Adrenal gland (tissue), 19 donors: ENCODE measurements at regions of chr5 and their contacts with region 1.

Region 1: GRCh38 chr5:96934708-96935558 is 947 bp upstream of the LNPEP start:
- DNase-seq: peak; percentile 88 to 95 (median 92)
- H3K4me3 ChIP-seq: peak overlapping the region; percentile 54 to 87 (median 66)
- H3K27ac ChIP-seq: peak overlapping the region; percentile 87 to 96 (median 91)
- H3K4me1 ChIP-seq: peaks cover 23 to 42% of the 10 kb centered on the region in 2 donors
- H3K27me3 ChIP-seq: no peaks in the 10 kb centered on the region
- CTCF ChIP-seq: peak in 2 of 6 experiments; percentile 23 to 47
- POLR2A ChIP-seq: peak; percentile 65 to 88

Region 2: DNA sequence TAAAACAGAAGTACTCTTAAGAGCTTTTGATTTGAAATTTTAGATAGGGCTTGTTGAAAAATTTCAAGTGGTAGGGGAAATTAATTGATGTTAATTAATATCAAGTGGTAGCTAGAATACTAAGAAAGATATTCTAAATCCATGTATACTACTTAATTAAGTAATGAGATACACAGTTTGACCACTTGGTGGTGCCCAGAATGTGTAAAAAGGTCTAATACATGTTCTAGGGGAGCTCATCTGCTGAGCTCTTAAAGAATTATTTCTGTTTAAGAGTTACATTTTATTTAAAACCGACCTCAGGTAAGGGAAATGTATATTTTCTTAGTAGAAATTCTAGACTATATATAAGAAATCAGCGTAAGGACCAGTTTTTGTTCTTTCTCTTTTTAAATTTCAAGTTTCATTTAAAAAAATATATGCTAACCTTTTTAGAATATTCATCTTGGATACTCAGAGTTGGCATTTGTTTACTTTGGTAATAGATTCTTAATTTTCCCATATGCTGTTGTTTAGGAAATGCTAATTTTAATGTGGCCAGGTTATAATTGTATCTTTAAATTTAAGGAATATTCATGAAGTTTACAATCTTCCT is 62.4 kb after region 1 on chr5:
- intact Hi-C with region 1: loop called in 1 of 2 experiments (anchors 10 kb)
- DNase-seq: peak in 3 of 7 donors; percentile 15 to 38 (median 24)
- H3K4me3 ChIP-seq: no peak overlapping the region
- H3K27ac ChIP-seq: no peak overlapping the region
- H3K4me1 ChIP-seq: no peaks in the 10 kb centered on the region
- H3K27me3 ChIP-seq: no peaks in the 10 kb centered on the region
- CTCF ChIP-seq: peak; percentile 26 to 60 (median 41)
- POLR2A ChIP-seq: no peak